ENCODE measurements at regions of chr10 and their contacts with region 1.

Region 1: DNA sequence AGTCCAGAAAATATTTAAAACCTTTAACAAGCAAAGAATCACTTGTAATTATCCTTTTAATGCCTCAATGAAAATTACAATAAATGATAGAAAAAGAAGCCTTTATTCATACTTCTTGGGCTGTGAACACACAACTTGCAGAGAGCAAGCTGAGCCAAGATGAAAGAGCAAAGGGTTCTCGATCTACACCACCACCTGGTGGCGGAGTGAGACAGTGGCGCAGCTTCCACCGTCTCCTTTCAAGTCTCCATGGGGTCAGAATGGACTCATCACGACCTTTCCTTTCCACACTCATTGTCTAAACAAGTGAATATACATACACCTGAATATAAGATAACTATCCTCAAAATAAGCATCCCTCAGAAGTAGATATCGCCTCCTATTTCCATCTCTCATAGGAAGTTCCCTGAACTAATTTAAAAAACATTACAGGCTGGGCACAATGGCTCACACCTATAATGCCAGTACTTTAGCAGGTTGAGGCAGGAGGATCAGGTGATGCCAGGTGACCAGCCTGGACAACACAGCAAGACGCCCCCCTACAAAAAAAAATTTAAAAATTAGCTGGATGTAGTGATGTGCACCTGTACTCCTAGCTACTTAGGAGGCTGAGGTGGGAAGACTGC is 40.7 kb downstream of the ATE1 start:
- DNase-seq: peak; percentile 41 to 73
- H3K4me3 ChIP-seq: no peak overlapping the region
- H3K27ac ChIP-seq: no peak overlapping the region
- H3K4me1 ChIP-seq: peaks cover 2 to 9% (median 4%) of the 10 kb centered on the region in 4 experiments; a peak in 6 of 7 replicates
- H3K27me3 ChIP-seq: no peaks in the 10 kb centered on the region
- CTCF ChIP-seq: peak; percentile 74 to 98 (median 96)
- EP300 ChIP-seq: no peak
- POLR2A ChIP-seq: no peak
- RAD21 ChIP-seq: peak; percentile 85 to 86

Region 2: GRCh38 chr10:121831777-121832176 is 55.3 kb before region 1 on chr10:
- CTCF ChIA-PET with region 1: interaction called, 43 read pairs
- POLR2A ChIA-PET with region 1: interaction called, 4 read pairs
- DNase-seq: no peak
- H3K4me3 ChIP-seq: no peak overlapping the region
- H3K27ac ChIP-seq: no peak overlapping the region
- H3K4me1 ChIP-seq: no peaks in the 10 kb centered on the region
- H3K27me3 ChIP-seq: no peaks in the 10 kb centered on the region
- CTCF ChIP-seq: no peak
- EP300 ChIP-seq: no peak
- POLR2A ChIP-seq: no peak
- RAD21 ChIP-seq: no peak

Region 3: GRCh38 chr10:121900443-121901174 is 13.5 kb after region 1 on chr10:
- CTCF ChIA-PET with region 1: interaction called, 46 read pairs
- POLR2A ChIA-PET with region 1: interaction called, 8 read pairs
- DNase-seq: no peak
- H3K4me3 ChIP-seq: no peak overlapping the region
- H3K27ac ChIP-seq: no peak overlapping the region
- H3K4me1 ChIP-seq: peaks cover 0 to 4% (median 0%) of the 10 kb centered on the region in 4 experiments; a peak in 2 of 7 replicates
- H3K27me3 ChIP-seq: no peaks in the 10 kb centered on the region
- CTCF ChIP-seq: peak in 2 of 3 experiments; percentile 61 to 76; a peak in 3 of 4 replicates
- EP300 ChIP-seq: no peak
- POLR2A ChIP-seq: no peak
- RAD21 ChIP-seq: peak; percentile 84

Region 4: DNA sequence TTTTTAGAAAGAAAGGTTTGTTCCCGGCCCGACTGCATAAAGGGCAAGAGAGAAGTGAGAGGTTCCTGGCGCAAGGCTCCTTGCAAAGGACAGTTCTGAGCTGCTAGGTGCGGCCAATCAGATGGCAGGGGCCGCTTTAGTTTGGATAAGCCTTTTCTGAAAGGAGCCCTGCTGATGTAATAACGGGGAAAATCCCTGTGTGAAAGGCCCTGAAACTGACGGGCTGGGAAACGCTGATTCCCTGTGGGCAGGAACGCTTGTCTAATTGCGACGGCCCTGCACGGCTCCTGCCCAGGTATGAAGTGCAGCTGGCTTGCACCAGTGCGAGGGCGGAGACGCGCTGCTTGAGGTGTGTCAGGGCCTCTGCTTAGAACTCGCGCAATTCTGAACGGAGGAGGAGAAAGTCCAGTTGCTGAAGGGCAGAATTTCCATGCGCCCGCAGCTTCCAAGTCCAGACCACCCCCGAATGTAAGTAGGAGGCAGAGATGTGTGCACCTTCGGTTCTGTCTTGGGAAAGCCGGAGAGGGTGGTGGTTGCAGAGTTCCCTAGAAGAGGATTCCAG is 132.4 kb after region 1 on chr10:
- CTCF ChIA-PET with region 1: no interaction called
- POLR2A ChIA-PET with region 1: no interaction called
- DNase-seq: peak in 1 of 2 experiments; percentile 52
- H3K4me3 ChIP-seq: peak overlapping the region in 1 of 4 experiments; percentile 23; a peak in 2 of 8 replicates
- H3K27ac ChIP-seq: no peak overlapping the region
- H3K4me1 ChIP-seq: peaks cover 0 to 8% (median 5%) of the 10 kb centered on the region in 4 experiments; a peak in 6 of 7 replicates
- H3K27me3 ChIP-seq: no peaks in the 10 kb centered on the region
- CTCF ChIP-seq: no peak
- EP300 ChIP-seq: no peak
- POLR2A ChIP-seq: no peak
- RAD21 ChIP-seq: no peak

Measured in H1 (cell line).